Naive thymus-derived CD4-positive, alpha-beta T cell (primary cell): ENCODE measurements at regions of chr3 and their contacts with region 1.

Region 1: DNA sequence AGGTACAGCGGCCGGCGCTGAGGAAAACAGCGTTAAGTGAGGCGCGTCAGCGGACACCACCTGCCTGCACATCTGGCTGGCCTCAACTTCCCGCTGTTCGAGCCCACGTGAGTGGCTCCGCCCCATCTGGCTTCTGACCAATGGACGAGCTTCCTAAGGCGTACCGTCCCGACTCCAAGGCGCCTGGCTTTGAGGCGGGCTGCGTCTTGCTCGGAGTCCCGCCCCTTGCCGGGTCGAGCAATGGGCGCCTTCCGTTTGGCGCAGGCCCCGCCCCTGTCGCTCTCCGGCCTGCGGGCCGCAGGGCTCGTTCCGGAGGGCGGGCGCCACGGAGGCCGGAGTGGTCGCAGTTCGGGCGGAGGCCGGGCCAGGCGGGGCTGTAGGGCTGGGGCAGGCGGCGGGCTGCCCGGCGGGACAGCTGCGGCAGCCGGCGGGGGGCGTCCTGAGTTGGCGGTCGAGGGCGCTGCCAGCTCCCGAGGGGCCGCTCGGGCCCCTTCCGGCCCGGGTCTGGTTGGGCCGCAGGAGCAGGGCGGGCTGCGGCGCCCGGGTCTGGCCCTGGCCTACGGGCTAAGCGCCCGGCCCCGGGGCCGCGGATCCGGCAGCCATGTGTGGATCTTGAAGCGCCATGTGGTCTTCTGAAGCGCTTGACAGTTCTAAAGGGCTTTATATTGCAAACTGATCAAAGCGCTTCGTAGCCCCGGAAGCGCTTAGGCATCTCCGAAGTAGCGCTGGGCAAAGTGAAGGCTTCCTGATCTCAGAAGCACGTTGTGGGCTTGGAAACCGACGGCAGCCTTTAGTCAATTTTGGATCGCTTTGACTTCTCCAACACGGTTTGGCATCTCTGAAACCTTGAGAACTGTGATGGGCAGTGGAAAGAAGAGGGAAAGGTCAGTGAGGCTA is at the start of gene TATDN2:
- DNase-seq: peak; percentile 80 to 91 (median 88)
- ATAC-seq: peak; percentile 98
- H3K4me3 ChIP-seq: peak within 1 kb of the TSS; percentile 99
- H3K4me3 Mint-ChIP-seq: peak within 1 kb of the TSS; percentile 96 to 100 (median 99)
- H3K27ac ChIP-seq: peak within 1 kb of the TSS; percentile 80
- H3K27ac Mint-ChIP-seq: peak within 1 kb of the TSS; percentile 91 to 97 (median 95)
- H3K4me1 ChIP-seq: peaks cover 28 to 30% of the 10 kb centered on the region in 2 donors
- H3K4me1 Mint-ChIP-seq: peaks cover 44 to 63% (median 52%) of the 10 kb centered on the region in 7 donors
- H3K27me3 ChIP-seq: no peaks in the 10 kb centered on the region
- H3K27me3 Mint-ChIP-seq: no peaks in the 10 kb centered on the region
- total RNA-seq, gene TATDN2: 52.9 to 88.8 (median 71.6) TPM

Region 2: GRCh38 chr3:9986237-9986725 is 262.2 kb before region 1 on chr3:
- CTCF ChIA-PET with region 1: no interaction called
- POLR2A ChIA-PET with region 1: interaction called, 3 read pairs
- intact Hi-C with region 1: loop called in 1 of 2 experiments (anchors 1 kb)
- DNase-seq: no peak
- ATAC-seq: peak; percentile 52
- H3K4me3 ChIP-seq: peak overlapping the region; percentile 100
- H3K4me3 Mint-ChIP-seq: peak overlapping the region; percentile 95 to 99 (median 98)
- H3K27ac ChIP-seq: peak overlapping the region; percentile 96
- H3K27ac Mint-ChIP-seq: peak overlapping the region; percentile 95 to 100 (median 98)
- H3K4me1 ChIP-seq: peaks cover 13 to 15% of the 10 kb centered on the region in 2 donors
- H3K4me1 Mint-ChIP-seq: peaks cover 0 to 48% (median 35%) of the 10 kb centered on the region in 7 donors
- H3K27me3 ChIP-seq: no peaks in the 10 kb centered on the region
- H3K27me3 Mint-ChIP-seq: no peaks in the 10 kb centered on the region

Region 3: GRCh38 chr3:10026084-10026890 is 222.1 kb before region 1 on chr3 and contains the start of gene FANCD2:
- CTCF ChIA-PET with region 1: no interaction called
- POLR2A ChIA-PET with region 1: interaction called, 6 read pairs
- intact Hi-C with region 1: loop called in 1 of 2 experiments (anchors 1 kb)
- DNase-seq: peak; percentile 88 to 99 (median 94)
- ATAC-seq: peak; percentile 95
- H3K4me3 ChIP-seq: peak within 1 kb of the TSS; percentile 96
- H3K4me3 Mint-ChIP-seq: peak within 1 kb of the TSS; percentile 93 to 99 (median 96)
- H3K27ac ChIP-seq: peak within 1 kb of the TSS; percentile 89
- H3K27ac Mint-ChIP-seq: peak within 1 kb of the TSS; percentile 86 to 98 (median 97)
- H3K4me1 ChIP-seq: peaks cover 11 to 13% of the 10 kb centered on the region in 2 donors
- H3K4me1 Mint-ChIP-seq: peaks cover 0 to 45% (median 29%) of the 10 kb centered on the region in 7 donors
- H3K27me3 ChIP-seq: no peaks in the 10 kb centered on the region
- H3K27me3 Mint-ChIP-seq: no peaks in the 10 kb centered on the region
- total RNA-seq, gene FANCD2: 18.3 to 41.5 (median 34.1) TPM

Region 4: GRCh38 chr3:10164546-10165393 is 83.7 kb before region 1 on chr3 and contains the start of gene IRAK2:
- CTCF ChIA-PET with region 1: no interaction called
- POLR2A ChIA-PET with region 1: interaction called, 3 read pairs
- intact Hi-C with region 1: loop called in 1 of 2 experiments (anchors 1 kb)
- DNase-seq: peak; percentile 25 to 75 (median 57)
- ATAC-seq: peak; percentile 92
- H3K4me3 ChIP-seq: peak within 1 kb of the TSS; percentile 85
- H3K4me3 Mint-ChIP-seq: peak within 1 kb of the TSS; percentile 79 to 94 (median 86)
- H3K27ac ChIP-seq: peak within 1 kb of the TSS; percentile 68
- H3K27ac Mint-ChIP-seq: peak within 1 kb of the TSS; percentile 2 to 89 (median 68)
- H3K4me1 ChIP-seq: peaks cover 5 to 9% of the 10 kb centered on the region in 2 donors
- H3K4me1 Mint-ChIP-seq: peaks cover 12 to 37% (median 25%) of the 10 kb centered on the region in 7 donors
- H3K27me3 ChIP-seq: no peaks in the 10 kb centered on the region
- H3K27me3 Mint-ChIP-seq: no peaks in the 10 kb centered on the region
- total RNA-seq, gene IRAK2: 1.5 to 4.8 (median 2.3) TPM

Region 5: GRCh38 chr3:10192953-10193691 is 55.3 kb before region 1 on chr3:
- CTCF ChIA-PET with region 1: no interaction called
- POLR2A ChIA-PET with region 1: interaction called, 4 read pairs
- intact Hi-C with region 1: loop called in 1 of 2 experiments (anchors 1 kb)
- DNase-seq: peak in 8 of 9 donors; percentile 35 to 68 (median 62)
- ATAC-seq: peak; percentile 24
- H3K4me3 ChIP-seq: peak overlapping the region; percentile 34
- H3K4me3 Mint-ChIP-seq: peak overlapping the region; percentile 70 to 90 (median 81)
- H3K27ac ChIP-seq: peak overlapping the region; percentile 75
- H3K27ac Mint-ChIP-seq: peak overlapping the region; percentile 90 to 98 (median 97)
- H3K4me1 ChIP-seq: peaks cover 78 to 86% of the 10 kb centered on the region in 2 donors
- H3K4me1 Mint-ChIP-seq: peaks cover 54 to 92% (median 85%) of the 10 kb centered on the region in 7 donors
- H3K27me3 ChIP-seq: no peaks in the 10 kb centered on the region
- H3K27me3 Mint-ChIP-seq: no peaks in the 10 kb centered on the region

Region 6: DNA sequence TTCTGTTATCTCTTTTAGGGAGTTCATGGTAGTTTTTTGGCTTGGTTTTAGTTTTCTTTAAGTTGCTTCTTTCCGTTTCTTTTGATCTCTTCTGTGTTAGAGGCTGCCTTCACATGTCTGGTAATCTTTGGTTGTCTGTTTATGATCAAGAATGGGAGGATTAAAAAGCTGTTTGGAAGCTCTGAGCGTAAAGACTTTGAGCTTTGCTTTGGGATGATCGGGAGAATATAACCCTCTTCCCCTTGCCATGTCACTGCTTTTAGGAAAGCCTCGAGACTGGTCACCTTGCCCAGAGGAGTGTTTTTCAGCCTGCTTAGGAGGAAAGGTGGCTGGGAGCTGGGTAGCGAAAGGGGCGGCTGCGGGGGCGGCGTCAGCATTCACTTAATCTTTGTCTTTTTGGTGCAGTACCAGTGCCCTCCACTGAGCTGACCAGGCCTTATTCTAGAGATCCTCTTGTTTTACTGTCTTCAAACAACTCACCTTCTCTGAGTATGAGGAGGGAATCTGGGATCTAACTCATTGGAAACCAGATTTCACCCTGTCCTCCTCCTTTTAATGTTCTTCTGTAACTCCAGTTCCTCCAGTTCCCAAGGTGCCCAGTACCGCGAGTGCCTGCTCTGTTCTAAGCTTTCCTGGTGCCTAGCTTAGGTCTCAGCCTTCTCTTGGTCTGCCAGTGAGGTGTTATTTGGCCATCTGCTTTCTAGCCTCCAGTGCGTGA is 15.4 kb after region 1 on chr3:
- CTCF ChIA-PET with region 1: interaction called, 4 read pairs
- POLR2A ChIA-PET with region 1: interaction called, 71 read pairs
- intact Hi-C with region 1: loop called (anchors 1 kb)
- DNase-seq: peak; percentile 33 to 76 (median 71)
- ATAC-seq: peak; percentile 96
- H3K4me3 ChIP-seq: peak overlapping the region; percentile 47
- H3K4me3 Mint-ChIP-seq: peak overlapping the region; percentile 68 to 87 (median 77)
- H3K27ac ChIP-seq: peak overlapping the region; percentile 73
- H3K27ac Mint-ChIP-seq: peak overlapping the region; percentile 82 to 97 (median 91)
- H3K4me1 ChIP-seq: peaks cover 36 to 62% of the 10 kb centered on the region in 2 donors
- H3K4me1 Mint-ChIP-seq: peaks cover 50 to 97% (median 80%) of the 10 kb centered on the region in 7 donors
- H3K27me3 ChIP-seq: no peaks in the 10 kb centered on the region
- H3K27me3 Mint-ChIP-seq: no peaks in the 10 kb centered on the region

Region 7: DNA sequence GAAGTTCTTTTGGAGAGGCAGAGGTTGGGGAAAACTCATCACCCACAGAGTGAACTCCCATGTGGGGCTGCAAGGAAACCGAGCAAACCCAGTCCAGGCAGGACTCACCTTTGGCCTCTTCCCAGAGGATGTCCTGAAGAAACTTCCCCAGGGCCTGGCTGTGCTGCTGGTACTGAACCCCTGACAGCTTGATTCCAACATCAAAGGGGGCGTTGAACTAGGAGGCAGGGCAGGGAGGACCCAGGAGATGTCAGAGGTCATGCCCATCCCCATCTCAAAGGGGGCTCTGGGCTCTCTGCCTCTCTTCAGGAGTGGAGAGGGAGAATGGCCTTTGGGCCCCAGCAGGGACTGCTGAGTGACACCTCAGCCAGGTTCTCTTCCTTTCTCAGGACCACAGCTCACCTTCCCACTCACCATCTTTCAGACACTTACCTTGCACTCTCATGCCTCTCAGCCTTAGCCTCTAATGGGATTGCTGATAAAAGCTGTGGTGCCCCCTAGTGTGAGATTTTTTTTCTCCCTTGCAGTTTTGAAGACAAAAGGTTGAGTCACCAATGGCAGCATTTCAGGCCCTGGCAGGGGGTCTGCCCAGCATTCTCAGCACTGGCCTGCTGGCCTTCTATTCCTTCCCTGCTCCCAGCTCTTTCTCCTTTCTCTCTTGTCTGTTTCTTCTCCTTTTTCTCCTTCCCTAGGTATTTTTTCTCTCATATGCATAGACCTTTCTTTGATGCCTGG is 38.3 kb after region 1 on chr3:
- CTCF ChIA-PET with region 1: no interaction called
- POLR2A ChIA-PET with region 1: no interaction called
- intact Hi-C with region 1: loop called in 1 of 2 experiments (anchors 2 kb)
- DNase-seq: peak in 5 of 9 donors; percentile 37 to 74 (median 50)
- ATAC-seq: peak; percentile 47
- H3K4me3 ChIP-seq: no peak overlapping the region
- H3K4me3 Mint-ChIP-seq: no peak overlapping the region
- H3K27ac ChIP-seq: no peak overlapping the region
- H3K27ac Mint-ChIP-seq: peak overlapping the region in 7 of 9 donors; percentile 12 to 75 (median 44)
- H3K4me1 ChIP-seq: peaks cover 12 to 13% of the 10 kb centered on the region in 2 donors
- H3K4me1 Mint-ChIP-seq: peaks cover 7 to 39% (median 28%) of the 10 kb centered on the region in 7 donors
- H3K27me3 ChIP-seq: no peaks in the 10 kb centered on the region
- H3K27me3 Mint-ChIP-seq: no peaks in the 10 kb centered on the region

Region 8: GRCh38 chr3:10344147-10344943 is 95.9 kb after region 1 on chr3:
- CTCF ChIA-PET with region 1: no interaction called
- POLR2A ChIA-PET with region 1: no interaction called
- intact Hi-C with region 1: no loop called
- DNase-seq: peak; percentile 26 to 67 (median 47)
- ATAC-seq: peak; percentile 39
- H3K4me3 ChIP-seq: no peak overlapping the region
- H3K4me3 Mint-ChIP-seq: no peak overlapping the region
- H3K27ac ChIP-seq: no peak overlapping the region
- H3K27ac Mint-ChIP-seq: peak overlapping the region in 1 of 9 donors; percentile 47
- H3K4me1 ChIP-seq: no peaks in the 10 kb centered on the region
- H3K4me1 Mint-ChIP-seq: peaks cover 0 to 2% (median 0%) of the 10 kb centered on the region in 7 donors
- H3K27me3 ChIP-seq: no peaks in the 10 kb centered on the region
- H3K27me3 Mint-ChIP-seq: peaks cover 0 to 6% (median 0%) of the 10 kb centered on the region in 5 donors